ENCODE measurements at regions of chr10 and their contacts with region 1.

Region 1: GRCh38 chr10:73772280-73773151 is 9.3 kb upstream of the CHCHD1 start:
- DNase-seq: peak; percentile 48
- ATAC-seq: peak; percentile 83
- H3K4me3 ChIP-seq: peak overlapping the region; percentile 94
- H3K27ac ChIP-seq: peak overlapping the region; percentile 83
- H3K4me1 ChIP-seq: peaks cover 5% of the 10 kb centered on the region
- H3K27me3 ChIP-seq: no peaks in the 10 kb centered on the region
- CTCF ChIP-seq: peak in 1 of 3 experiments; percentile 13; a peak in 2 of 6 replicates
- EP300 ChIP-seq: 0 out of 4 replicates have a peak, but pooled peaks of 1 of the 2 experiments have one; percentile 10
- POLR2A ChIP-seq: peak; percentile 79
- RAD21 ChIP-seq: no peak

Region 2: GRCh38 chr10:73730153-73730906 is 42.2 kb before region 1 on chr10:
- CTCF ChIA-PET with region 1: interaction called, 14 read pairs
- POLR2A ChIA-PET with region 1: interaction called, 7 read pairs
- RAD21 ChIA-PET with region 1: interaction called, 12 read pairs
- SMC1A ChIA-PET with region 1: interaction called, 24 read pairs
- in situ Hi-C with region 1: no loop called
- intact Hi-C with region 1: no loop called
- DNase-seq: peak; percentile 68
- ATAC-seq: peak; percentile 95
- H3K4me3 ChIP-seq: peak overlapping the region; percentile 80
- H3K27ac ChIP-seq: peak overlapping the region; percentile 67
- H3K4me1 ChIP-seq: no peaks in the 10 kb centered on the region; the same call in 1 of the 2 replicates
- H3K27me3 ChIP-seq: no peaks in the 10 kb centered on the region
- CTCF ChIP-seq: no peak
- EP300 ChIP-seq: no peak
- POLR2A ChIP-seq: peak; percentile 92
- RAD21 ChIP-seq: no peak

Region 3: DNA sequence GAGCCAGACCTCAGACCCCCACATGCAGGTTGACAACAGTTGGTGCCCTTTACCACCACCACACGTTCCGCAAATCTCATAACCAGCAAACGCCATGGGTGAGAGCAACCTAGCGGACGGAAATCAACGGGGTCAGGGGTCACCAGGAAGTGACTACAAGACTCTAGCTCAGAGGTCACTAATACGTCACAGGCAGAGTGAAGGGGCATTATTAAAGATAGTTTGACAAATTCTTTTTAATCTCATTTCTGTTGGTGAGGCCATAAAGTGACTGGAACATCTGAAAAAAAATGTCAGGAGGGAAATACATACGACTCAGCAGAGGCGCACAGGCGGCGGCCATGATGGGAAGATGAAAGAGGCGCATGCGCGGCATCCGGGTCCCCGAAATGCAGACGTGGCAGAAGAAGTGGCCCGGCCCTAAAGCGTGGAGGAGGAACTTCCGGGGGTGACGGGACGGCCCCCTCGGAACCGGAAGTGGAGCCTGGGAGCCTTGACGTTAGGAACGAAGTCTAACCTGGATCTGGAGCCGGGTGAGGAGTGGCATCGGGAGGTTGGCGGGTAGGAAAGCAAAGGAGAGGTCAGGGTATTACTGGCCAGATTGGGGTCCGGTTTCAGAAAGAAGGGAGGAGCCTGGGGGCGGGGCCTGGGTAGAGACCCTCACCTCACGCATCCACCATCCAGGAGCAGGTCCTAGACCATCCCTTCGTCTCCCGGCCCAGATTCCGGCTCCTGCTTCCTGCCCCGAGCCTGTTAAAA is 28.4 kb before region 1 on chr10 and contains the start of gene SEC24C:
- CTCF ChIA-PET with region 1: interaction called, 8 read pairs
- POLR2A ChIA-PET with region 1: interaction called, 28 read pairs
- RAD21 ChIA-PET with region 1: interaction called, 16 read pairs
- SMC1A ChIA-PET with region 1: interaction called, 29 read pairs
- in situ Hi-C with region 1: no loop called
- intact Hi-C with region 1: no loop called
- DNase-seq: peak; percentile 88
- ATAC-seq: peak; percentile 92
- H3K4me3 ChIP-seq: peak within 1 kb of the TSS; percentile 95
- H3K27ac ChIP-seq: peak within 1 kb of the TSS; percentile 97
- H3K4me1 ChIP-seq: peaks cover 11% of the 10 kb centered on the region
- H3K27me3 ChIP-seq: no peaks in the 10 kb centered on the region
- CTCF ChIP-seq: no peak
- EP300 ChIP-seq: no peak
- POLR2A ChIP-seq: peak; percentile 92
- RAD21 ChIP-seq: no peak
- polyA plus RNA-seq, gene SEC24C: 12.7 to 18.8 TPM

Region 4: DNA sequence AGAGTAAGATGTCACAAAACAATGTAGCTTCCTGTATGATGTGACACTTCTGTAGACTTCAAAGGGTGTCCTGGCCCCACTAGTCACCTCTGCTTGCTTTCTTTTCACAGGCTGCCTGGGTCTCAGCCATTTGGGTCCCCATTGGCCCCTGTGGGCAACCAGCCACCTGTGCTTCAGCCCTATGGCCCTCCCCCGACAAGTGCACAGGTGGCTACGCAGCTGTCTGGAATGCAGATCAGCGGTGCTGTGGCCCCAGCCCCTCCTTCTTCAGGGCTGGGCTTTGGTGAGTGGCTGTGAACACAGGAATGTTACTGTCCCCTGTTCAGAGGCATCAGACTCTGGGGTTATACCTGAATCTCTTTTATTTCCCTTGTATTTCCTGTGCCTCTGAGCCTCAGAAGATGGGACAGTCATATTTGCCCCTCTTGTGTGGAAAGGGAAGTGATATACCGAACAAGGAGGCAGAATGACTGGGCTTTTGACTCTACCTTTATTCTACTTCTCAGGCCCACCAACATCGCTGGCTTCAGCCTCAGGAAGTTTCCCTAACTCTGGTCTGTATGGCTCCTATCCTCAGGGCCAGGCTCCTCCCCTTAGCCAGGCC is 12.9 kb before region 1 on chr10:
- CTCF ChIA-PET with region 1: interaction called, 10 read pairs
- POLR2A ChIA-PET with region 1: interaction called, 63 read pairs
- RAD21 ChIA-PET with region 1: interaction called, 37 read pairs
- SMC1A ChIA-PET with region 1: interaction called, 46 read pairs
- in situ Hi-C with region 1: no loop called
- intact Hi-C with region 1: no loop called
- DNase-seq: no peak
- ATAC-seq: peak; percentile 76
- H3K4me3 ChIP-seq: no peak overlapping the region
- H3K27ac ChIP-seq: peak overlapping the region; percentile 84
- H3K4me1 ChIP-seq: peaks cover 55% of the 10 kb centered on the region
- H3K27me3 ChIP-seq: no peaks in the 10 kb centered on the region
- CTCF ChIP-seq: no peak
- EP300 ChIP-seq: no peak
- POLR2A ChIP-seq: no peak
- RAD21 ChIP-seq: no peak

Region 5: DNA sequence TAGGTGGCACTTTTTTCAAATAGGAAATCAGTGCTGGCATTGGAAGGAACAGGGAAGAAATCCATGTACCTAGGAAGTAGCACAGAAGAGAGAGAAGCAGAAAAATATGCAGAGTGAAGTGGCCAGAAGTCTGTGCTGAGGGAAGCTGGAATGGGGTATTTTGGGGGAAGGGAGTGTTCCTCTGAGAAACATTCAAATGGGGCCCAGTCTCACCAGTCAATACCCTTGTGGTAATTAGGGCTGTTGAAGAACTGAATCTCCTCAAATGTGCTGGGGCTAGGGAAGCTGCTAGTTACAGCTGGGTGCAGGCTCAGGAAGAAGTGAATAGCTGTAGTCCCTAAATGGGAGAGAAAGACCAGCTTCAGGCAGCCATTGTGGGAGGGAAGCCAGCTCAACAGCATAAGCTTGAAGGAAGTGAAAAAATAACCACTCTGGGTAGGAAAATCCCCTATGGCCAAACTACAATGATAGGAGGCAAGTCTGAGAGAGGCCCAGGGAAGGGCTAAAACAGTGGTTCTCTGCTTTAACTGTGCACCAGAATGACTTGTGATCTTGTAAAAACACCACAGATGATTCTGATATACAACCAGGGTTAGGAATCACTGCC is 31.3 kb after region 1 on chr10:
- CTCF ChIA-PET with region 1: interaction called, 19 read pairs
- POLR2A ChIA-PET with region 1: interaction called, 13 read pairs
- RAD21 ChIA-PET with region 1: interaction called, 15 read pairs
- SMC1A ChIA-PET with region 1: interaction called, 9 read pairs
- in situ Hi-C with region 1: no loop called
- intact Hi-C with region 1: no loop called
- DNase-seq: peak; percentile 81
- ATAC-seq: peak; percentile 95
- H3K4me3 ChIP-seq: no peak overlapping the region
- H3K27ac ChIP-seq: peak overlapping the region; percentile 97
- H3K4me1 ChIP-seq: peaks cover 25% of the 10 kb centered on the region
- H3K27me3 ChIP-seq: no peaks in the 10 kb centered on the region
- CTCF ChIP-seq: no peak
- EP300 ChIP-seq: 0 out of 4 replicates have a peak, but pooled peaks of 1 of the 2 experiments have one; percentile 48
- POLR2A ChIP-seq: 0 out of 2 replicates have a peak, but pooled peaks have one; percentile 32
- RAD21 ChIP-seq: no peak

Region 6: GRCh38 chr10:73810735-73811465 is 38.4 kb after region 1 on chr10:
- CTCF ChIA-PET with region 1: interaction called, 19 read pairs
- POLR2A ChIA-PET with region 1: interaction called, 5 read pairs
- RAD21 ChIA-PET with region 1: interaction called, 15 read pairs
- SMC1A ChIA-PET with region 1: interaction called, 9 read pairs
- in situ Hi-C with region 1: no loop called
- intact Hi-C with region 1: loop called (anchors 5 kb)
- DNase-seq: no peak
- ATAC-seq: peak; percentile 56
- H3K4me3 ChIP-seq: peak overlapping the region; percentile 81
- H3K27ac ChIP-seq: peak overlapping the region; percentile 80
- H3K4me1 ChIP-seq: peaks cover 6% of the 10 kb centered on the region
- H3K27me3 ChIP-seq: no peaks in the 10 kb centered on the region
- CTCF ChIP-seq: no peak
- EP300 ChIP-seq: no peak
- POLR2A ChIP-seq: no peak
- RAD21 ChIP-seq: no peak

Region 7: DNA sequence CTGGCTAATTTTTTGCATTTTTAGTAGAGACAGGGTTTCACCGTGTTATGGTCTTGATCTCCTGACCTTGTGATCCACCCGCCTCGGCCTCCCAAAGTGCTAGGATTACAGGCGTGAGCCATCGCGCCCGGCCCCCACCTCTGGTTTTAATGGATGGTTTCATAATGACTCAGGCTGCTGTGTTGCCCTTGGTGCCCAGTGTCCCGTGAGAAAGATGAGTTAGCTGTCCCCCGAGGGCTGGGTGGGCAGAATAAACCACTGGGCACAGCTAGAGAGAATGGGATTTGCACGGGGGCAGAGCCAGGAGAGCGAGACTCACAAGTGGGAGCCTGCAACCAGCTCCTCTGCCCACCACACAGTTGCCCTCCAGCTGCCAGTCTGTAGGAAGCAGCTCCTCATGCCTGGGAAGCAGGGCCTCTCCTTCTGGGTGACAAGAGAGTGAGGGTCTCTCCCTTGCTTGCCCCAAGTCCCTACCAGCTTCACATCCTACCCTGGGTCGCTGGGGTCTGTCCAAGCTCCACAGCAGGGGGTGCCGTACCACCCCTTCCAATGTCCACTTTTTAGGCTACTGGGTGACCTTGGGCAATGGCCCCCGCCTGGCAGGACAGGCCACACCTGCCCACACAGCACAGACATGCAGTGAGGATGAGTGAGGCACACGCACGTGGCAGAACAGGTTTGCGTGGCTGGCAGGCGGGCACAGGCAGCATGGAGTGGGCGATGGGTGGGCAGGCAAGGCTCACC is 55.0 kb after region 1 on chr10:
- CTCF ChIA-PET with region 1: no interaction called
- POLR2A ChIA-PET with region 1: no interaction called
- RAD21 ChIA-PET with region 1: no interaction called
- SMC1A ChIA-PET with region 1: no interaction called
- in situ Hi-C with region 1: no loop called
- intact Hi-C with region 1: no loop called
- DNase-seq: no peak
- ATAC-seq: no peak; the same call in 2 of the 3 replicates
- H3K4me3 ChIP-seq: no peak overlapping the region
- H3K27ac ChIP-seq: no peak overlapping the region
- H3K4me1 ChIP-seq: no peaks in the 10 kb centered on the region
- H3K27me3 ChIP-seq: no peaks in the 10 kb centered on the region
- CTCF ChIP-seq: no peak
- EP300 ChIP-seq: no peak
- POLR2A ChIP-seq: no peak
- RAD21 ChIP-seq: no peak

Region 8: DNA sequence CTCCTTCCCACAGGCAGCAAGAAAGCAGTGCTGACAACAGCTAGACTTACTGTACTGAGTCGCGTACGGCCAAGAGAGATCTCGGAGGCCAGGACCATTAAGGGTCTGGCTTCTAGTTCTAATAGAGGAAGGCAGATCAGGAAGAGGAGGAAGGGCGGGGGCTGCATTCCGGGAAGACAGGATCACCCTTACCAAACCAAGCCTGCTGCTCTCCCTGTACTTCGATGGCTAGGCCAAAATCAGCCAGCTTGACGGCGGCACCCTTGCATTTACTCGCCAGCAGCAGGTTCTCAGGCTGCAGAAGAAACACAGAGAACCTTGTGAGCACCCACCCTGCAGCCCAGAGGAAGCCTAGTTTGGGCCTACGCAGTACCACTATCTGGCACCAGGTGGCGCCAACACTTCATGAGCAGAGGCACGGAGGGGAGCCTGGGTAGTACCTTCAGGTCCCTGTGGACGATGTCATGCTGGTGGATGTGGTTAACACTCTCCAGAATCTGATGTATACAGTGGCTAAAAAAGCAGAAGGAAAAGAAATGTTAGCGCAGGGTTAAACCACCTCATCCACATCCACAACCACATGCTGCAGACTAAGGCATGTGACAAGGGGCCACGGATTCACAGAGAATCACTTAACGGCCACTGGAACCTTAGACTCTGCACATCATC is 76.4 kb after region 1 on chr10:
- CTCF ChIA-PET with region 1: interaction called, 4 read pairs
- POLR2A ChIA-PET with region 1: no interaction called
- RAD21 ChIA-PET with region 1: interaction called, 3 read pairs
- SMC1A ChIA-PET with region 1: interaction called, 4 read pairs
- in situ Hi-C with region 1: no loop called
- intact Hi-C with region 1: loop called (anchors 5 kb)
- DNase-seq: peak; percentile 85
- ATAC-seq: peak; percentile 99
- H3K4me3 ChIP-seq: no peak overlapping the region
- H3K27ac ChIP-seq: no peak overlapping the region
- H3K4me1 ChIP-seq: peaks cover 5% of the 10 kb centered on the region; the same call in 1 of the 2 replicates
- H3K27me3 ChIP-seq: no peaks in the 10 kb centered on the region
- CTCF ChIP-seq: peak; percentile 99 to 100 (median 99); a peak in 5 of 6 replicates
- EP300 ChIP-seq: peak; percentile 93 to 97
- POLR2A ChIP-seq: no peak
- RAD21 ChIP-seq: peak; percentile 99

Region 9: DNA sequence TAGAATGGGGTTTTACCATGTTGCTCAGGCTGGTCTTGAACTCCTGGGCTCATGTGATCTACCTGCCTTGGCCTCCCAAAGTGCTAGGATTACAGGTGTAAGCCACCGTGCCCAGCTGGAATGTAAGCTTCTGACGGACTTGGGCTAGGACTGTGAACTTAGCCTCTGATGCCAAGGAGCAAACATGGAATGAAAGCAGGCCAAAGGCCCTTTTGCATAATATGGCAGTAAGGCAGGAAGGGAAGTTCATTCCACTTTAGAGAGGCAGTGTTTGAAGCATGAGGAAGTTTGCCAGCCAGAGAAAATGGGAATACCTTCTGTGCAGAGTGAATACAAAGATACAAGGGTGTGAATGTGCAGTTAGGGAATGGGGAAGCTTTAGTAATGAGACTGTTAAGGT is 245.7 kb after region 1 on chr10:
- CTCF ChIA-PET with region 1: no interaction called
- POLR2A ChIA-PET with region 1: no interaction called
- RAD21 ChIA-PET with region 1: no interaction called
- SMC1A ChIA-PET with region 1: no interaction called
- in situ Hi-C with region 1: no loop called
- intact Hi-C with region 1: no loop called
- DNase-seq: no peak
- ATAC-seq: no peak
- H3K4me3 ChIP-seq: no peak overlapping the region
- H3K27ac ChIP-seq: no peak overlapping the region
- H3K4me1 ChIP-seq: no peaks in the 10 kb centered on the region; the same call in 1 of the 2 replicates
- H3K27me3 ChIP-seq: no peaks in the 10 kb centered on the region
- CTCF ChIP-seq: no peak
- EP300 ChIP-seq: no peak
- POLR2A ChIP-seq: no peak
- RAD21 ChIP-seq: no peak

Region 10: DNA sequence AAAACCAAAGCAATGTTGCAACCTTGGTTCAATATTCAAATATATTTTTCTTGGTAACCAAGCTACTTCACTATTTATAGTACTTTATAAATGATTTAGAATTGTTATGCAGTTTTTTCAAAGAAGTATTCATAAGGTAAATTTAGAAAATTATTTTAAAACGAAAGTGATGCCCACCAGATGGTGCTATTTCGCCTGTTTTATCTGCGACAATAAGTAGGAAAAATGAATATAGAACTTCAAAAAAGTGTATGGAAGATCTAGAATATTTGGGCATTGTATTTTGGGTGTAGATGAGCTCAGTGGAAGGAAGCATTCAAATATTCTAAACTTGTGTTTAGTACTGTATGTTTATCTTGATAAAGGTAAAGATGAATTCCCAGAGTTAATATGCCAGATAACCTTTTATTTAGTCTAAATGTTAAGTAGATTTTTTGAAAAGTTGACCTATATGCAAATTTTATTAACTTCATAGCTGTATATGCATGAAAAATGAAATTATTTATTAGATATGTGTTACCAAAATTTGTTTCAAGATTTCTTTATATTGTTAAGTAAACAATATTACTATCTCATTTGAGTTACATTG is 471.7 kb after region 1 on chr10:
- CTCF ChIA-PET with region 1: no interaction called
- POLR2A ChIA-PET with region 1: no interaction called
- RAD21 ChIA-PET with region 1: no interaction called
- SMC1A ChIA-PET with region 1: no interaction called
- in situ Hi-C with region 1: no loop called
- intact Hi-C with region 1: no loop called
- DNase-seq: no peak
- ATAC-seq: no peak
- H3K4me3 ChIP-seq: no peak overlapping the region
- H3K27ac ChIP-seq: no peak overlapping the region
- H3K4me1 ChIP-seq: no peaks in the 10 kb centered on the region
- H3K27me3 ChIP-seq: no peaks in the 10 kb centered on the region
- CTCF ChIP-seq: peak; percentile 16 to 48 (median 40); a peak in 3 of 6 replicates
- EP300 ChIP-seq: no peak
- POLR2A ChIP-seq: no peak
- RAD21 ChIP-seq: peak; percentile 61

Region 11: GRCh38 chr10:75530337-75530736 is 1757.8 kb after region 1 on chr10:
- CTCF ChIA-PET with region 1: no interaction called
- POLR2A ChIA-PET with region 1: no interaction called
- RAD21 ChIA-PET with region 1: no interaction called
- SMC1A ChIA-PET with region 1: no interaction called
- in situ Hi-C with region 1: no loop called
- intact Hi-C with region 1: no loop called
- DNase-seq: no peak
- ATAC-seq: no peak
- H3K4me3 ChIP-seq: no peak overlapping the region
- H3K27ac ChIP-seq: no peak overlapping the region
- H3K4me1 ChIP-seq: no peaks in the 10 kb centered on the region
- H3K27me3 ChIP-seq: no peaks in the 10 kb centered on the region
- CTCF ChIP-seq: no peak
- EP300 ChIP-seq: no peak
- POLR2A ChIP-seq: no peak
- RAD21 ChIP-seq: no peak